Activated naive CD4-positive, alpha-beta T cell treated with anti-CD3 and anti-CD28 coated beads, Interleukin-2, amount 10 ng/mL, durations not matched to agents 7 days and 5 days (primary cell): ENCODE measurements at regions of chr10 and their contacts with region 1.

Region 1: DNA sequence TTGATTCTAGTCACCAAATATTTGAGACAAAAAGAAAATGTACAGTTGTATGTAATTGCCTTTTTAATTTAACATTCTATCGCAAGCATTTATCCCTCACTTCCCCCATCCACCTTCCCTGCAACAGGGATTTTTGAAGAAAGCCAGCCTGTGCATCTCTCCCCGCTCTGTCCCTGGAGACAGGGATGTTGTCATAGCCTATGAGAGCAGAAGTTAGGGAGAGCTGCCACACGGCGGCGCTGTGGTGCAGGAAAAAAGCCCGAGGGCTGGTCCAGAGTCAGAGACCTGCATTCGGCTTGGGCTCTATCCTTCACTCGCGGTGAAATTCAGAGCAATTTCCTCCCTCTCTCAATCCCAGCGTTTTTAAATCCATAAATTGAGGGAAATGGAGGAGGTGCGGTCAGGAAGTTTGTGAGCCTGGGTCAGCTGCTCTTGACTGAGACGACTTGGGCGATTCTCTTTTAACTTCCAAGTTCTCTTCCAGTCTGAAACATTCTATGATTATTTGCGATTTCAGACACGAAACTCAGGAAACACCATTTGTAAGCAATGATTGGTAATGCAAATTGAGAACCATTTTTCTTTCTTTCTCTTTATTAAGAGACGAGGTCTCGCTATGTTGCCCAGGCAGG is 17.5 kb downstream of the HKDC1 start:
- DNase-seq: peak; percentile 90
- H3K4me3 Mint-ChIP-seq: no peak overlapping the region
- H3K27ac Mint-ChIP-seq: no peak overlapping the region
- H3K4me1 Mint-ChIP-seq: peaks cover 53% of the 10 kb centered on the region
- H3K27me3 Mint-ChIP-seq: peaks cover 5% of the 10 kb centered on the region

Region 2: GRCh38 chr10:69217119-69217754 is 20.4 kb before region 1 on chr10:
- CTCF ChIA-PET with region 1: no interaction called
- DNase-seq: no peak
- H3K4me3 Mint-ChIP-seq: no peak overlapping the region
- H3K27ac Mint-ChIP-seq: no peak overlapping the region
- H3K4me1 Mint-ChIP-seq: peaks cover 46% of the 10 kb centered on the region
- H3K27me3 Mint-ChIP-seq: peaks cover 4% of the 10 kb centered on the region

Region 3: DNA sequence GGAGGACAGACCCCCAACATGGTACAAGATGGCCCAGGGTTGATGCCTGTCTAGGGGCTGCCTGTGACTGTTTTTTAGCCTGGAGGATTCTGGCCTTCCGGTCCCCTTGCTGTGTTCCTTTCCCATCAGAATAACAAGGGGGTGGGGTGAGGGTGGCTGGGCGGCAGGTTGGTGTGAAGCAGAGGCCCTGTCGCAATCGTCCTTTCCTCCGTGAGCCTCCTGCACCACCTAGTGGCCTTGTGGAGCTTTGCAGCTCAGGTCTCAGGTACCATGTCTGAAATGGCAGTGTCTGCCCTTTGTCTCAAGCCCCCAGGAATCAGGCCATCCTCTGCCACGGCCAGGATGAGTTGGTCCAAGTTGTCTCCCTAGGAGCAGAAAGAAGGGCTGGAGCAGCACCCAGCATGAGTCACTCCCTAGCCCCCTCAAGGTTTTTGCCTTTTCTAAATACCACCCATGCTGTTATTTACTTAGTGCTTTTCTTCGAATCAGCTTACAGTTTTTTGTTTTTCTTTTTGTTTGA is 154.9 kb after region 1 on chr10:
- CTCF ChIA-PET with region 1: interaction called, 98 read pairs
- DNase-seq: peak; percentile 90
- H3K4me3 Mint-ChIP-seq: no peak overlapping the region
- H3K27ac Mint-ChIP-seq: peak overlapping the region; percentile 84
- H3K4me1 Mint-ChIP-seq: peaks cover 35% of the 10 kb centered on the region
- H3K27me3 Mint-ChIP-seq: no peaks in the 10 kb centered on the region